Activated naive CD4-positive, alpha-beta T cell treated with anti-CD3 and anti-CD28 coated beads for 36 hours (primary cell): ENCODE measurements at regions of chrX and their contacts with region 1.

Region 1: GRCh38 chrX:66074920-66075879 is 35.3 kb upstream of the VSIG4 start:
- DNase-seq: peak; percentile 73
- H3K4me3 Mint-ChIP-seq: peak overlapping the region; percentile 28
- H3K27ac Mint-ChIP-seq: peak overlapping the region; percentile 48
- H3K4me1 Mint-ChIP-seq: peaks cover 25% of the 10 kb centered on the region
- H3K27me3 Mint-ChIP-seq: no peaks in the 10 kb centered on the region

Region 2: DNA sequence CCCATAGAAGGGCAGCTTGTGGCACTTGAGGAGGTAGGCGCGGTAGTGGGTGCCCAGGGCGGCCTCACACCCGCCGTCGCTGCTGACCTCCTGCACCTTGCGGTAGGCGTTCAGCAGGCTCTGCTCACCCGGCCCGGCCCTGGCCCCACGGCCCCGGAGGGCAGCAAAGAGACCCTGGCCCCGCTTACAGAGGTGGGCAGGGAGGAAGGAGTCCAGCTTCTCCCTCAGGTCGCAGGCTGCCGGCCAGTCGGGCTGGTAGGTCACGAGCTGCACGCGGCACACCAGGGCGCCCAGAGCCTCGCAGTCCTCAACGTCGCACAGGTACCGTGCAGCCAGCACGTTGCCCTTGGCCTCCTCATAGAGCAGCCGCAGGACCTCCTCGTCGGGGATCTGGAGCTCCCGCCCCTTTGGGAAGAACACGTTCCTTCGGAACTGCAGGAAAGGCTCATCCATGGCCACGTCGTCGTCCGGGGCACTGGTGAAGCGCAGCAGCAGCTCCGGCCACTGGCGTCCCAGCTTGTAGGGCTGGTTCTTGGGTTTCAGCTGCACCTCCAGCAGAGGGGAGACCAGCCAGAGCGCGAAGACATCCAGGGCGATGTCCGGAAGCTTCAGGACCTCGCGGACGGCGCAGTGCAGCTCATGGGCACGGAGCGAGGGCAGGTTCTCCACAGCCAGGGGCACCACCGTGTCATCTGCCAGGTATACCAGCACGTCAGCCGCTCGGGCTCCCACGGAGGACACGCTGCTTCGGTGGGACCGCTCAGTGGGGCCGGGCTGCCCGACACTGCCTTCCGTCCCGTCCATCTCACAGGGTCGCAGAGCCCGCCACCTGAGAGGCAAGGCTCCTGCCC is 523.5 kb before region 1 on chrX:
- CTCF ChIA-PET with region 1: no interaction called
- intact Hi-C with region 1: no loop called
- DNase-seq: no peak
- H3K4me3 Mint-ChIP-seq: no peak overlapping the region
- H3K27ac Mint-ChIP-seq: no peak overlapping the region
- H3K4me1 Mint-ChIP-seq: no peaks in the 10 kb centered on the region
- H3K27me3 Mint-ChIP-seq: no peaks in the 10 kb centered on the region

Region 3: GRCh38 chrX:65811558-65812228 is 263.5 kb before region 1 on chrX:
- CTCF ChIA-PET with region 1: no interaction called
- intact Hi-C with region 1: no loop called
- DNase-seq: no peak
- H3K4me3 Mint-ChIP-seq: no peak overlapping the region
- H3K27ac Mint-ChIP-seq: no peak overlapping the region
- H3K4me1 Mint-ChIP-seq: no peaks in the 10 kb centered on the region
- H3K27me3 Mint-ChIP-seq: no peaks in the 10 kb centered on the region

Region 4: GRCh38 chrX:66030505-66031317 is 44.5 kb before region 1 on chrX:
- CTCF ChIA-PET with region 1: interaction called, 3 read pairs
- intact Hi-C with region 1: loop called (anchors 5 kb)
- DNase-seq: peak; percentile 37
- H3K4me3 Mint-ChIP-seq: no peak overlapping the region
- H3K27ac Mint-ChIP-seq: no peak overlapping the region
- H3K4me1 Mint-ChIP-seq: peaks cover 5% of the 10 kb centered on the region
- H3K27me3 Mint-ChIP-seq: no peaks in the 10 kb centered on the region